Heart right ventricle (tissue), 16 donors: ENCODE measurements at regions of chr7 and their contacts with region 1.

Region 1: GRCh38 chr7:64618785-64619456 is 47.0 kb upstream of the ZNF107 start:
- DNase-seq: peak in 1 of 2 donors; percentile 40
- ATAC-seq: peak; percentile 51 to 82 (median 76)
- H3K4me3 ChIP-seq: no peak overlapping the region
- H3K27ac ChIP-seq: no peak overlapping the region
- H3K4me1 ChIP-seq: no peaks in the 10 kb centered on the region
- H3K27me3 ChIP-seq: peaks cover 0 to 5% (median 0%) of the 10 kb centered on the region in 7 donors
- CTCF ChIP-seq: peak; percentile 62 to 83 (median 71)

Region 2: GRCh38 chr7:63008366-63008765 is 1610.6 kb before region 1 on chr7:
- intact Hi-C with region 1: loop called in 3 of 10 experiments (anchors 10 kb)
- DNase-seq: no peak
- ATAC-seq: no peak
- H3K4me3 ChIP-seq: no peak overlapping the region
- H3K27ac ChIP-seq: no peak overlapping the region
- H3K4me1 ChIP-seq: no peaks in the 10 kb centered on the region
- H3K27me3 ChIP-seq: no peaks in the 10 kb centered on the region
- CTCF ChIP-seq: peak in 3 of 9 donors; percentile 26 to 32 (median 31)

Region 3: DNA sequence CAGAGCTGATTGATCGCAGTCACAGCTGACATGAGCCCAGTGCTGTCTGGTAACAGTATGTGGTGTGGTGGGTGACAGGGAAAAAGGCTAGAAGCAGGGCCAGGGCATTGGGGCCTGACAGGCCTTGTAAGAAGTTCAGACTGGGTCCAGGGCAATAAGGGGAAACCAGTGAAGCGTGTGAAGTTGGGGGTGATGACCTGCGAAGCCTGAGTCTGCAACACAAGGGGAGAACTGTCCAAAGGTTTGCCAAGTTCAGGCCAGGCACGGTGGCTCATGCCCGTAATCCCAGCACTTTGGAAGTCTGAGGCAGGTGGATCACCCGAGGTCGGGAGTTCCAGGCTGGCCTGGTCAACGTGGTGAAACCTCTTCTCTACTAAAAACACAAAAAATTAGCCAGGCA is 1604.1 kb before region 1 on chr7:
- intact Hi-C with region 1: loop called in 4 of 10 experiments (anchors 5 to 10 kb)
- DNase-seq: no peak
- ATAC-seq: no peak
- H3K4me3 ChIP-seq: no peak overlapping the region
- H3K27ac ChIP-seq: no peak overlapping the region
- H3K4me1 ChIP-seq: no peaks in the 10 kb centered on the region
- H3K27me3 ChIP-seq: no peaks in the 10 kb centered on the region
- CTCF ChIP-seq: no peak

Region 4: GRCh38 chr7:64183126-64183742 is 435.7 kb before region 1 on chr7:
- intact Hi-C with region 1: loop called in 9 of 10 experiments (anchors 1 to 5 kb)
- DNase-seq: peak; percentile 22 to 38
- ATAC-seq: peak in 3 of 8 donors; percentile 37 to 50 (median 38)
- H3K4me3 ChIP-seq: no peak overlapping the region
- H3K27ac ChIP-seq: no peak overlapping the region
- H3K4me1 ChIP-seq: peaks cover 0 to 6% (median 0%) of the 10 kb centered on the region in 9 donors
- H3K27me3 ChIP-seq: peaks cover 20 to 42% (median 24%) of the 10 kb centered on the region in 7 donors
- CTCF ChIP-seq: peak; percentile 69 to 89 (median 79)

Region 5: DNA sequence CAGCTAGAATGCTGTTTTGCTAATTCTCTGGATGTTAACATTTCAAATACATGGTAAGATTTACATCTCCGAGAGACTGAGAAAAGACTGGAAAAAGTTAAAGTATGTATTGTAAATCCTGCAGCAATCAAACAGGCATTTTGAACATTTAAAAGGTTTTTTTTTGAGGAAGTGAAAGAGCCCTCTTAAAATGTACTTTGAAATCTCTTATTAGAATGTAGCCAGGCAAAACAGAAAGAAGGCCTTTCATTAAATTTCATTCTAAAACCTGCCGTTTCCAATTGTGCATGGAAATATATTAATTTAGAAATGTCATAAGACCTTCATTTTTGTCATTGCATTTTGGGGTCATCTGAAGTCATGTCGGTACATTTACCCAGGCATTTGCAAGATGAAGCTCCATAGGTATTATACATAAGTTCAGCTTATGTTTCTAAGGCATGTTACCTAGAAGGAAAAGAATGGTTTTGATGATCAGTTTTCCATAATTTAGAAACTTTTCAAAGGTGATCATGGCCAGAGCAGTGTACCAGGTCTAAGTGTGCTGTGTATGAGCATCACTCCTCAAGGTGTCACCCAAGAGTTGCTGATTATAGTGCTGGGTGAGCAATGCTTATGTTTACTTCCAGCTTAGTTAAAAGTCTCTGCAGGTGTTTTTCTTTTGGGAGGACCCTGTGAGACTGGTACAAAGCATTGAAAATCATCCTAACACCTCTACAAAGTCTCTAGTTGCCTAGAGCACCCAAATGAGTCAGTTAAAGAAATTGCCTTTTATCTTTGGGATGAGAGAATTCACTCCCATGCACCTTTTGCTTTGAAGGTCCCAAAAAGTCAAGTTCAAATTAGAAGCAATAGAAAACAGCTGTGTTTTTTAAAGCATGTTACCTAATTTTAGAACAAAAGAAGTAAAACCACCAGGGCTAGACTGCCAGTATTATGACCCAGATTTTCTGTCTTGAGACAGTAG is 298.1 kb before region 1 on chr7:
- intact Hi-C with region 1: loop called in 4 of 10 experiments (anchors 2 to 10 kb)
- DNase-seq: no peak
- ATAC-seq: peak in 4 of 8 donors; percentile 58 to 75 (median 62)
- H3K4me3 ChIP-seq: no peak overlapping the region
- H3K27ac ChIP-seq: no peak overlapping the region
- H3K4me1 ChIP-seq: peaks cover 0 to 4% (median 0%) of the 10 kb centered on the region in 9 donors
- H3K27me3 ChIP-seq: no peaks in the 10 kb centered on the region
- CTCF ChIP-seq: peak in 5 of 9 donors; percentile 9 to 48 (median 37)

Region 6: GRCh38 chr7:64551375-64552142 is 67.4 kb before region 1 on chr7:
- intact Hi-C with region 1: no loop called
- DNase-seq: no peak
- ATAC-seq: peak; percentile 48 to 90 (median 82)
- H3K4me3 ChIP-seq: no peak overlapping the region
- H3K27ac ChIP-seq: peak overlapping the region; percentile 20 to 81 (median 67)
- H3K4me1 ChIP-seq: peaks cover 0 to 74% (median 43%) of the 10 kb centered on the region in 9 donors
- H3K27me3 ChIP-seq: no peaks in the 10 kb centered on the region
- CTCF ChIP-seq: no peak